ENCODE measurements at regions of chr9 and their contacts with region 1.

Region 1: DNA sequence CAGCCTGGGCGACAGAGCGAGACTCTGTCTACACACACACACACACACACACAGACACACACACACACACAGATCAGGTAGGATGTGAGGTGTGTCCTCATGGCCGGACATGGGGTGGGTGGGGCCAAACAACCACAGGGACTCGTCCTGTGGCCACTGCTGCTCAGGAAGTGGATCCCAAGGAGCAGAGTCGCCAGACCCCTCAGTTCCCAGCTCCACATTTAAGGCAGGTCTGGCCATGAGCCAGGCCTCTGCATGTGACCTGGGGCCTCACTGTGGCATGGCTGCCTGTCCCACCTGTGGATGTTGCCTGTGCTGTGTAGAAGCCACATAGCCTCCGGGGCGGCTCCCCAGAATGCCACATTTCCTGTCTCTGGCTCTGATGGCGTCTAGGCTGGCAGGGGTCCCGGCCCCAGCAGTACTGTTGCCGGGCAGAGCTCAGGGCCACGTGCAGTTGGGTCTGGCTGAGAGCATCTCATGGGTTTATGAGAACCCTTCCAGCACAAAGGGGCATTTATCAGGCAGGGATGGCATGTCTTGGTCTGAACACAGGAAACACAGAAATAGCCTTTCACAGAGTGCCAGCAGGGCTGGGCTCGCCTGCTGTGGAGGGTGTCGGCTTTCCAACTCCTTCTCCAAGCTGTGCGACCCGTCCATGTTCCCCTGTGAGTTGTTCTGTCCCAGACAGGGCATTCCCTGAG is 9.9 kb upstream of the NINJ1 start:
- DNase-seq: peak in 7 of 9 donors; percentile 72 to 81 (median 80)
- ATAC-seq: peak; percentile 94
- H3K4me3 ChIP-seq: peak overlapping the region; percentile 31
- H3K4me3 Mint-ChIP-seq: peak overlapping the region; percentile 50 to 78 (median 68)
- H3K27ac ChIP-seq: peak overlapping the region; percentile 68
- H3K27ac Mint-ChIP-seq: peak overlapping the region; percentile 92 to 99 (median 95)
- H3K4me1 ChIP-seq: peaks cover 24 to 47% of the 10 kb centered on the region in 2 donors
- H3K4me1 Mint-ChIP-seq: peaks cover 23 to 75% (median 56%) of the 10 kb centered on the region in 7 donors
- H3K27me3 ChIP-seq: no peaks in the 10 kb centered on the region
- H3K27me3 Mint-ChIP-seq: no peaks in the 10 kb centered on the region

Region 2: GRCh38 chr9:93003552-93004407 is 140.2 kb before region 1 on chr9:
- CTCF ChIA-PET with region 1: no interaction called
- POLR2A ChIA-PET with region 1: no interaction called
- intact Hi-C with region 1: no loop called
- DNase-seq: peak in 8 of 9 donors; percentile 55 to 77 (median 70)
- ATAC-seq: peak; percentile 88
- H3K4me3 ChIP-seq: peak overlapping the region; percentile 21
- H3K4me3 Mint-ChIP-seq: peak overlapping the region in 9 of 10 donors; percentile 54 to 72 (median 69)
- H3K27ac ChIP-seq: peak overlapping the region; percentile 56
- H3K27ac Mint-ChIP-seq: peak overlapping the region; percentile 81 to 98 (median 91)
- H3K4me1 ChIP-seq: peaks cover 47 to 60% of the 10 kb centered on the region in 2 donors
- H3K4me1 Mint-ChIP-seq: peaks cover 38 to 76% (median 67%) of the 10 kb centered on the region in 7 donors
- H3K27me3 ChIP-seq: no peaks in the 10 kb centered on the region
- H3K27me3 Mint-ChIP-seq: no peaks in the 10 kb centered on the region

Region 3: GRCh38 chr9:93126825-93127368 is 17.1 kb before region 1 on chr9:
- CTCF ChIA-PET with region 1: no interaction called
- POLR2A ChIA-PET with region 1: interaction called, 11 read pairs
- intact Hi-C with region 1: no loop called
- DNase-seq: peak in 1 of 9 donors; percentile 41
- ATAC-seq: no peak
- H3K4me3 ChIP-seq: peak overlapping the region; percentile 30
- H3K4me3 Mint-ChIP-seq: peak overlapping the region; percentile 21 to 86 (median 71)
- H3K27ac ChIP-seq: peak overlapping the region; percentile 48
- H3K27ac Mint-ChIP-seq: peak overlapping the region; percentile 41 to 93 (median 88)
- H3K4me1 ChIP-seq: peaks cover 23 to 64% of the 10 kb centered on the region in 2 donors
- H3K4me1 Mint-ChIP-seq: peaks cover 45 to 74% (median 56%) of the 10 kb centered on the region in 7 donors
- H3K27me3 ChIP-seq: no peaks in the 10 kb centered on the region
- H3K27me3 Mint-ChIP-seq: no peaks in the 10 kb centered on the region

Measured in naive thymus-derived CD4-positive, alpha-beta T cell (primary cell).